ENCODE measurements at regions of chr15 and their contacts with region 1.

Region 1: GRCh38 chr15:67146875-67147381 is 81.5 kb downstream of the SMAD3 start:
- DNase-seq: no peak
- ATAC-seq: peak; percentile 4
- H3K4me3 ChIP-seq: no peak overlapping the region
- H3K27ac ChIP-seq: peak overlapping the region; percentile 100
- H3K4me1 ChIP-seq: peaks cover 100% of the 10 kb centered on the region
- H3K27me3 ChIP-seq: no peaks in the 10 kb centered on the region
- CTCF ChIP-seq: no peak

Region 2: DNA sequence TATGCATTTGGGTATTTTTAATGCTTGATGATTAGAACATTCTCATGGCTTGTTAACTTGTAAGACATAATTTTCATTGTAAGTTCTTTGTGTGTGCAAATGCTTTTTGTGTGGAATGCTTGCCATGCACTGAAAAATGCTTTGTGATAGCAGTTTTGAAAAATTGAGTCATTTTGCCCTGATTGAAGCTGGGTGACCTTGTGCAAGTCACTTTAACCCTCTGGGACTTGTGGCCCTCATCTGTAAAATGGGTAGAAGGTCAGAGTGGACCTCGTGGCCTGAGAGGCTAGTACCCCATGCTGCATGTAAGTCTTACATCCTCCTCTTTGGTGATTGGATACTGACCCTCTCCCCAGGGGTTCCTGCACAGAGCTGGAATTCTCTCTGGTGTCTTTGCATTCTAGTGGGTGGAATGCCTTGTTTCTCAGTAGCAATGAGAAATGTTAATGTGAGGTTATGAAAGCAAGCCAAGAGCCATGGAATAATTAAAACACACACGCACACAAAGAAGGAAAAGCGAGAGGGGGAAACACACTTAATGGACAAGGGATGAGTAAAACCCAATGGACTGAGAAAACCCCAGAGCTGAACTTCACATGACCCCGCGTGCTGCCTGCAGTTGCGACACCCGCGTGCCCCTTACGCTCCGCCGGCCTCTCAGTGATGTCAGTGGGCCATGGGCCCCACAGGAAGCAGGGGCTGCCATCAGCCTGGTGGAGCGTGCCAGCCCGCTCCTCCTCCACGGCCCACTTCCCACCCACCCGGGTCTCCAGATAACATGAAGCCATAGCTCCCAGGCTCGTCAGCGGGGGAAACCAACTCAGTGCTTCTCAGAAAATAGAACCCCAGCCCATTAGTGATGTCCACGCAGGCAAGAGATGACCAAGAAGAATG is 37.5 kb before region 1 on chr15:
- CTCF ChIA-PET with region 1: no interaction called
- POLR2A ChIA-PET with region 1: interaction called, 3 read pairs
- in situ Hi-C with region 1: no loop called
- intact Hi-C with region 1: loop called (anchors 5 kb)
- DNase-seq: no peak
- ATAC-seq: peak; percentile 14
- H3K4me3 ChIP-seq: no peak overlapping the region
- H3K27ac ChIP-seq: peak overlapping the region; percentile 100
- H3K4me1 ChIP-seq: peaks cover 85% of the 10 kb centered on the region
- H3K27me3 ChIP-seq: no peaks in the 10 kb centered on the region
- CTCF ChIP-seq: no peak

Region 3: DNA sequence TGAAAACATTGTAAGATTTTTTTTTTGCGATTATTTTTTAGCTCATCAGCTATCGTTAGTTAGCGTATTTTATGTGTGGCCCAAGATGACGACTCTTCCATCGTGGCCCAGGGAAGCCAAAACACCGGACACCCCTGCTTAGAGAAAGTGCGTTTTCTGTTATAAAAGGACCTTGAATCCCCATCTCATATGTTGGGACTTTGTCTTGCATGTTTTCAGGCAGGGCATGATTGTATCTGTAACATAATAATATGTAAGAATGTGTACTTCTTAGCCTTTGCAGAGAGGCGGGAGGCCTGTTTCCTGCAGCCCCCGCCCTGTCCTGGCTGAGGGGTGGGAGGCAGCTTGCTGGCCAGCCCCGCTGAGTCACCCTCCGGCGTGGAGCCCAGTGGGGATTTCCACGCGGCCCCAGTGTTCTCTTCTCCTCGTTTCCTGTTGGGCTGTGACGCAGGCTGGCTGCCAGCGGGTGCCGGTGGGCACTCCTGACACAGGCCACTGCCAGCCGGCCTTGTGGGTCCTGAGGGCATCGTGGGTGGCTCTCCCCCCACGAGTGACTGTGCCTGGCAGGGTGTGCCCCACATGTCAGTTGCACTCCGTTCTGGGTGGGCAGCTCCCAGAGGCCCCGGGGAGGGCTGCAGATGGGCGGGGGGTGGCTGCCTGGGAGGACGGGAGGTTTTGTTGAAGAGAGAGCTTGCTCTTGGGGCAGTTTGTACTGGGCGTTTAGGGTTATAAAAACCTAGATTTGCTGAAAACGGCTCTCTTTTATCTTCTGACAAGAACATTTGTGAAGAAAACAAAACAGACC is 25.9 kb before region 1 on chr15:
- CTCF ChIA-PET with region 1: no interaction called
- POLR2A ChIA-PET with region 1: interaction called, 13 read pairs
- in situ Hi-C with region 1: no loop called
- intact Hi-C with region 1: no loop called
- DNase-seq: no peak
- ATAC-seq: peak; percentile 22
- H3K4me3 ChIP-seq: no peak overlapping the region
- H3K27ac ChIP-seq: peak overlapping the region; percentile 100
- H3K4me1 ChIP-seq: peaks cover 97% of the 10 kb centered on the region
- H3K27me3 ChIP-seq: no peaks in the 10 kb centered on the region
- CTCF ChIP-seq: no peak

Region 4: DNA sequence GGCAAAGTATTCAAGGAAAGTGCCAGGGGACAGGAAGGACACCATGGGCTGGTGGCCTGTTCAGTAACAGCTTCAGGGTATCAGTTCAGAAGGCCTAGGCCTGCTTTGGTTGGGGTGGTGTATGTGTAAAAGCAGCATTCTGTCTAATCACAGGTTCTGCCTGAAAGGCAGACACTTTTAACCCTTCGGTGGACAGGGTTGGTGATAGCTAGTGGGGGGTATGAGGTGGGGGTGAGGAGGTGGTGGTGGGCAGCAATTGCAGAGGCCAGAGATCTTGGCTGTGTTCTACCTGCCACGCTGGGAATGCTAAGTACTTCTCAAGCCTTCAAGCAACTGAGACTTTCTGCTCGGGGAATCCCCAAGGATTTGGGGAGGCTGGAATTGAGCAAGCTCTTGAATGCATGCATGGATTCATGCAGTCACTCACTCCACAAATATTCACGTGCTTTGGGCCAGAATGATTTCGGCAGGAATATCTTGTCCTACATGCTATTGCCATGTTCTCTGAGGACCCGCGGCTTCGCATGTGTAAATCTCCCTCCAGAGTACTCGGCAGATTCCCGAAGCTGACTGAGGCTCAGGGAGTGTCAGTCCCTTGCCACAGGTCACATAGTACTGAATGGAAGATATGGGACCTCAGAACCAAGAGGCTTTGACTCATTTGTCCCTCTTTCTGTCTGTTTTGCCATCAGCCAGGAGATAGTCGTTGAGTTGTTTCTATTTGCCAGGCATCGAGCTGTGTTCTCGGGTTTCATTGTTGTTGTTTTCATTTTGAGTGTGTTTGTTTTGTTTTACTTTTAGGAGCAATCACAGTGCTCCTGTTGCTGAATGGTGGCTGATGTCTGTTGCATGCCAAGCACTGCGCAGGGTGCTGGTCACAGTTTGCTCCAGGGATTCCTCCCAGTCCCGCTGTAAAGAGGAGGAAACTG is 16.0 kb before region 1 on chr15:
- CTCF ChIA-PET with region 1: interaction called, 7 read pairs
- POLR2A ChIA-PET with region 1: interaction called, 17 read pairs
- in situ Hi-C with region 1: no loop called
- intact Hi-C with region 1: no loop called
- DNase-seq: no peak
- ATAC-seq: no peak
- H3K4me3 ChIP-seq: no peak overlapping the region
- H3K27ac ChIP-seq: peak overlapping the region; percentile 100
- H3K4me1 ChIP-seq: peaks cover 100% of the 10 kb centered on the region
- H3K27me3 ChIP-seq: no peaks in the 10 kb centered on the region
- CTCF ChIP-seq: no peak

Region 5: DNA sequence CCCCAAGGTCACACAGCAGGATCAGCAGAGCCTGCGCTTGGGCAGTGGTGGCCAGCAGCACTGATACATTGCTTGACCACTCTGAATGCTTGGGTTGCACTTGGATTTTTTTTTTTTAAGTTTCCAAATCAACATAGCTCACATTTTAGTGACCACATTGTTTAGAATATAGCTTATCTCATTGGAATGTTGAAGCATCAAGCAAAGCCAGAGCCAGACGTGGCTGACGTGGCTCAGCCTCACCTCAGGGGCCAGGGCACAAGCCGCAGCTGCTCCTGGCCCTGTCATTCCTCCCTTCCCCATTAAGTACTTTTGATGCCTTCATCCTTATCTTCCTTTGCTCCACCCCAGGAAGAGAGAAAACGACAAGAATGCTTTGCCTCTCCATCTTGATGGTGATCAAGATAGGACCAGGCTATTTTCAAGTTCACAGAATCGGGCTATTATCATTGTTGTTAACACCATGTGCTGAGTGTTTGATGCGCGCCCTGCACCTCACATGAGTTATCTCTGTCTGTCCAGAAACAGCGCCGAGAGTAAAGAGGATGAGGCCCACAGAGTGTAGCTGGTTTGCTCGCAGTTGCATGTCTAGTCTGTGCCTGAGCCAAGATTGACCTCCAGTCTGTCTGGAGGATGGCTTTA is 31.8 kb after region 1 on chr15:
- CTCF ChIA-PET with region 1: no interaction called
- POLR2A ChIA-PET with region 1: interaction called, 11 read pairs
- in situ Hi-C with region 1: no loop called
- intact Hi-C with region 1: no loop called
- DNase-seq: peak; percentile 81
- ATAC-seq: peak; percentile 60
- H3K4me3 ChIP-seq: no peak overlapping the region
- H3K27ac ChIP-seq: peak overlapping the region; percentile 94
- H3K4me1 ChIP-seq: peaks cover 93% of the 10 kb centered on the region
- H3K27me3 ChIP-seq: no peaks in the 10 kb centered on the region
- CTCF ChIP-seq: no peak

Region 6: DNA sequence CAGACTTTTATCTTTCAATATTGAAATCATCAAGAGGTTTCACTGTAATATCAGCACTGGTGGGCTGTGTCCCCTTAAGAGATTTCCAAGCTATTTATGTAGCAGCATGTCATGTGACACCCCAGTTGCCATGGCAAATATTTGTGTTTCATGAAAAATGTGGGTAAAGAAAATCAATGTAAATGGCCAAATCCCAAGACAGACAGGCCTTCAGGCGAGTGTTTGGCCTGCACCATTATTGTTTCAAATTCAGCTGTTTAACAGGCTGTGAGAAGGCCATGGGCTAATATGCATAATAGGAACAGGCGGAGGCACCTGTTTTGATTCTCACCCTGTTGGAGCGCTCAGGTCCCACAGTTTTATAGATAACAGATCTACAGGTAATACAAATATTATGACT is 211.9 kb after region 1 on chr15:
- CTCF ChIA-PET with region 1: no interaction called
- POLR2A ChIA-PET with region 1: no interaction called
- in situ Hi-C with region 1: no loop called
- intact Hi-C with region 1: no loop called
- DNase-seq: no peak
- ATAC-seq: no peak
- H3K4me3 ChIP-seq: no peak overlapping the region
- H3K27ac ChIP-seq: no peak overlapping the region
- H3K4me1 ChIP-seq: no peaks in the 10 kb centered on the region
- H3K27me3 ChIP-seq: no peaks in the 10 kb centered on the region
- CTCF ChIP-seq: no peak

Measured in Panc1 (cell line).